ENCODE measurements at regions of chr9 and their contacts with region 1.

Region 1: GRCh38 chr9:3732077-3733038 is 206.6 kb upstream of the RFX3 start:
- DNase-seq: peak; percentile 38
- H3K4me3 Mint-ChIP-seq: no peak overlapping the region
- H3K27ac Mint-ChIP-seq: no peak overlapping the region
- H3K4me1 Mint-ChIP-seq: peaks cover 13% of the 10 kb centered on the region
- H3K27me3 Mint-ChIP-seq: no peaks in the 10 kb centered on the region

Region 2: DNA sequence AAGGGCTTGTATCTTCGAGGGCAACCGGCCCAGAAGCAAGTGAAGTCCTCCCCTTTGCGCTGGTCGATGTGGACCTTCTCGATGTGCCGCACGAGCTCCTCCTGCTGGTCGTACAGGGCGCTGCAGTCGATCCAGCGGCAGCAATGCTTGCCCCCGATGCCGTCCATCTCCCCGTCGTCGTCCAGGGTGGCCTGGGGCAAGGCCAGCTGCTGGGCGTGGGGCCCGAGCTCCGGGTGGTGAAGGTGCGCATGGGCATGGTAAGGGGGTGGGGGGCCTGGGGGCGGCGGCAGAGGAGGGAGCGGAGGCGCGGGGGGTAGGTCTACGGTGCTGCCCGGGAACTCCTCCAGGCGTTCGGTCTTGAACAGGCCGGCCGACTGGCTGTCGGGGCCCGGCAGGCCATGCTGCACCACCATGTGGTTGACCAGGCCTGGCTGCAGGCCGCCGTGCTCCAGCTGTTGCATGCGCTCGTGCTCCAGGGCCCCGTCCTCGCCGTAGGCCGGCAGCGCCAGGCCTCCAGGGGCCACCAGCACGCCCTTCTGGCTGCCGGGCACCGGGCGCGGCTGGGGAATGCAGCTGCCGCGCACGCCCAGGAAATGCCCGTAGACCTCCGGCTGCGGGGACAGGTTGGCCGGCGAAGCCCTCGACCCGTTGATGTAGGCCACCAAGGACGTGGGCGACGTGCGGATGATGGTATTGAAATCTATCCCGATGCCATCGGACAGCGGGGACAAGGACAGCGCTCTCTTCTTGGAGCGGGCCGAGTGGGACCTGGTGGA is 385.7 kb after region 1 on chr9:
- CTCF ChIA-PET with region 1: interaction called, 15 read pairs
- DNase-seq: peak; percentile 62
- H3K4me3 Mint-ChIP-seq: no peak overlapping the region
- H3K27ac Mint-ChIP-seq: no peak overlapping the region
- H3K4me1 Mint-ChIP-seq: no peaks in the 10 kb centered on the region
- H3K27me3 Mint-ChIP-seq: no peaks in the 10 kb centered on the region

Measured in activated naive CD4-positive, alpha-beta T cell treated with anti-CD3 and anti-CD28 coated beads, Interleukin-2, amount 10 ng/mL, durations not matched to agents 7 days and 5 days (primary cell).